AG04450 (cell line): ENCODE measurements at regions of chr3 and their contacts with region 1.

Region 1: GRCh38 chr3:69828817-69829216 is 89.6 kb downstream of the MITF start:
- DNase-seq: no peak
- H3K4me3 ChIP-seq: no peak overlapping the region
- H3K27ac ChIP-seq: no peak overlapping the region
- H3K27me3 ChIP-seq: no peaks in the 10 kb centered on the region
- CTCF ChIP-seq: no peak

Region 2: GRCh38 chr3:69848113-69848512 is 19.3 kb after region 1 on chr3:
- CTCF ChIA-PET with region 1: interaction called, 10 read pairs
- POLR2A ChIA-PET with region 1: no interaction called
- DNase-seq: no peak
- H3K4me3 ChIP-seq: no peak overlapping the region
- H3K27ac ChIP-seq: no peak overlapping the region
- H3K27me3 ChIP-seq: no peaks in the 10 kb centered on the region
- CTCF ChIP-seq: no peak